Heart right ventricle (tissue), 16 donors: ENCODE measurements at regions of chr9 and their contacts with region 1.

Region 1: GRCh38 chr9:131125128-131126058 is at the start of gene NUP214:
- DNase-seq: peak; percentile 99
- ATAC-seq: peak; percentile 99 to 100 (median 100)
- H3K4me3 ChIP-seq: peak within 1 kb of the TSS; percentile 69 to 97 (median 83)
- H3K27ac ChIP-seq: peak within 1 kb of the TSS; percentile 12 to 92 (median 83)
- H3K4me1 ChIP-seq: peaks cover 3 to 23% (median 17%) of the 10 kb centered on the region in 9 donors
- H3K27me3 ChIP-seq: no peaks in the 10 kb centered on the region
- CTCF ChIP-seq: no peak
- total RNA-seq, gene NUP214: 17.8 to 27.1 (median 23.6) TPM

Region 2: DNA sequence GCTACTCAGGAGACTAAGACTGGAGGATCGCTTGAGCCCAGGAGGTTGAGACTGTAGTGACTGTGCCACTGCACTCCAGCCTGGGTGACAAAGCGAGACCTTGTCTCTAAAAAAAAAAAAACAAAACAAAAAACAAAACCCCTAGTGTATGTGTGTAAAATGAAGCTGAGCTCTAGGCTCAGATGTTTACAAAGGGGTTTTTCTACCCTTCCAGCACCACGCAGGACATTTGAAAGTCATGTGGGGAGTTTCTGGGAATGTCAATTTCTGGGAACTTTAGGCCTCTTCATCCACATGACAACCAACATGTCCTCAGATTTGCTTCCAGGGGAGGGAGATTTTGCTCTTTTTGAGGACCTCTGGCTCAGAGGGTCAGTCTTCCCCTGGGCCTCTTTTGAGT is 71.5 kb before region 1 on chr9:
- intact Hi-C with region 1: loop called in 7 of 10 experiments (anchors 2 to 10 kb)
- DNase-seq: no peak
- ATAC-seq: no peak
- H3K4me3 ChIP-seq: no peak overlapping the region
- H3K27ac ChIP-seq: no peak overlapping the region
- H3K4me1 ChIP-seq: peaks cover 0 to 10% (median 0%) of the 10 kb centered on the region in 9 donors
- H3K27me3 ChIP-seq: peaks cover 0 to 17% (median 0%) of the 10 kb centered on the region in 7 donors
- CTCF ChIP-seq: no peak

Region 3: GRCh38 chr9:131082774-131083512 is 42.5 kb before region 1 on chr9:
- intact Hi-C with region 1: loop called in 1 of 10 experiments (anchors 1 kb)
- DNase-seq: no peak
- ATAC-seq: peak in 6 of 8 donors; percentile 33 to 85 (median 64)
- H3K4me3 ChIP-seq: no peak overlapping the region
- H3K27ac ChIP-seq: peak overlapping the region in 1 of 10 donors; percentile 70
- H3K4me1 ChIP-seq: peaks cover 0 to 7% (median 0%) of the 10 kb centered on the region in 9 donors
- H3K27me3 ChIP-seq: no peaks in the 10 kb centered on the region
- CTCF ChIP-seq: peak in 1 of 9 donors; percentile 7